ENCODE measurements at regions of chr3 and their contacts with region 1.

Region 1: DNA sequence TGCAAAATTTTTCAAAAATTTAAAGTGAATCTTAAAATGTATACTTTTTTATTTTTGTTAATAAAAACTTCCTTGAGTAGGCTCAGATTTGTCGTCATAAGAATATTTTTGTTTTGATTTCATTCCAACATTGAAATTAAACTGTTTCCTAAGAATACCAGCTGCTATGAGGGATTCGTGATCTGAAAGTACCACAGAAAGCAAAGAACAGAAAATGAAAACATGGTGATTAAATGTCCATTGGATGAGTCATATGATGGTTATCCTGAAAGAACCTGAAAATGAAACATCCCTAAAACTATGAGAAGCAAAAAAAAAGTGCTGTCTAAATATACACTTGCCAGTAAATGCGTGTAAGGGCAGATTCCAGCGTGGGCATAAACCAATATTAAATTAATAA is 143.8 kb downstream of the GMNC start:
- DNase-seq: peak; percentile 48
- H3K4me3 Mint-ChIP-seq: peak overlapping the region; percentile 65
- H3K27ac Mint-ChIP-seq: peak overlapping the region; percentile 93
- H3K4me1 Mint-ChIP-seq: no peaks in the 10 kb centered on the region
- H3K27me3 Mint-ChIP-seq: no peaks in the 10 kb centered on the region
- CTCF ChIP-seq: no peak

Region 2: DNA sequence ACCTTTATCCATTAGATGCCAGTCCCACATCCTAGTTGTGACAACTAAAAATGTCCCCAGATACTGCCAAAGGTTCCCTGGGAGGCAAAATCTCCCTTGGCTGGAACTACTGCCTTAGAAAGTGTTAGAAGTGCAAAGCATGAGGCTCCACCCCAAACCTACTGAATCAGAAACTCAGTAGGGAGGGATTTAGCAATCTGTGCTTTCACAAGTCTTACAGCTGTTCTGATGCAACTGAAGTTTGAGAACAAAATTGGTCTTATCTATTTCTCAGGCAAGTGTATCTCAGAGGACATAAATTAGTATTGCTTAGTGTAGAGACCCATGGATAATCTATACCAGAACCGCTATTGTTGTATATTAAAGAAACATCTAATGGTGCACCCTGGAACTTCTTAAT is 466.6 kb before region 1 on chr3:
- CTCF ChIA-PET with region 1: no interaction called
- POLR2A ChIA-PET with region 1: no interaction called
- intact Hi-C with region 1: no loop called
- DNase-seq: peak; percentile 81
- H3K4me3 Mint-ChIP-seq: no peak overlapping the region
- H3K27ac Mint-ChIP-seq: no peak overlapping the region
- H3K4me1 Mint-ChIP-seq: peaks cover 9% of the 10 kb centered on the region
- H3K27me3 Mint-ChIP-seq: no peaks in the 10 kb centered on the region
- CTCF ChIP-seq: no peak

Region 3: DNA sequence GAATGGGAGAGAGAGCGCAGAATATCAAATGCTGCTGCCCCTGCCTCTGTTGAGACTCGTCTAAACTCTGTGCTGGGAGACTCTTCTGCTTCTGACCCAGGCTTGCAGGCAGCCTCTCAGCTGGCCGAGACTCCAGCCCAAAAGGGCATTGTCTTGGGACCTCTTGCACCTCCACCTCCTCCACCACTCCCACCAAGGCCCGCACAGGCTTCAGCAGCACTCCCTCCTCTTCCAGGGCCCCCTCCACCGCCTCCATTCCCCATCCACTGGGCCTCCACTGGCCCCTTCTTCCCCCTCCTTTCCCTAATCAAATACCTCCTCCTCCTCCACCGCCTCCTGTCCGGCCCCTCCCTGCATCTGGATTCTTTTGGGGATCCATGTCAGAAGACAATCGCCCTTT is 112.6 kb after region 1 on chr3:
- CTCF ChIA-PET with region 1: no interaction called
- POLR2A ChIA-PET with region 1: no interaction called
- intact Hi-C with region 1: no loop called
- DNase-seq: no peak
- H3K4me3 Mint-ChIP-seq: no peak overlapping the region
- H3K27ac Mint-ChIP-seq: no peak overlapping the region
- H3K4me1 Mint-ChIP-seq: peaks cover 8% of the 10 kb centered on the region
- H3K27me3 Mint-ChIP-seq: no peaks in the 10 kb centered on the region
- CTCF ChIP-seq: no peak

Region 4: GRCh38 chr3:190862209-190863118 is 143.8 kb after region 1 on chr3 and contains the start of gene GMNC:
- CTCF ChIA-PET with region 1: interaction called, 3 read pairs
- POLR2A ChIA-PET with region 1: no interaction called
- intact Hi-C with region 1: loop called (anchors 5 kb)
- DNase-seq: peak; percentile 82
- H3K4me3 Mint-ChIP-seq: peak within 1 kb of the TSS; percentile 71
- H3K27ac Mint-ChIP-seq: peak within 1 kb of the TSS; percentile 43
- H3K4me1 Mint-ChIP-seq: peaks cover 12% of the 10 kb centered on the region
- H3K27me3 Mint-ChIP-seq: no peaks in the 10 kb centered on the region
- CTCF ChIP-seq: no peak
- total RNA-seq, gene GMNC: not detected in 2 replicates

Region 5: GRCh38 chr3:191051037-191051436 is 332.4 kb after region 1 on chr3:
- CTCF ChIA-PET with region 1: interaction called, 21 read pairs
- POLR2A ChIA-PET with region 1: no interaction called
- intact Hi-C with region 1: loop called (anchors 1 kb)
- DNase-seq: peak; percentile 41
- H3K4me3 Mint-ChIP-seq: no peak overlapping the region
- H3K27ac Mint-ChIP-seq: no peak overlapping the region
- H3K4me1 Mint-ChIP-seq: no peaks in the 10 kb centered on the region
- H3K27me3 Mint-ChIP-seq: no peaks in the 10 kb centered on the region
- CTCF ChIP-seq: peak; percentile 38

Region 6: GRCh38 chr3:191328962-191329653 is 610.4 kb after region 1 on chr3 and contains the start of gene CCDC50:
- CTCF ChIA-PET with region 1: no interaction called
- POLR2A ChIA-PET with region 1: no interaction called
- intact Hi-C with region 1: loop called (anchors 5 kb)
- DNase-seq: peak; percentile 80
- H3K4me3 Mint-ChIP-seq: peak within 1 kb of the TSS; percentile 76
- H3K27ac Mint-ChIP-seq: peak within 1 kb of the TSS; percentile 91
- H3K4me1 Mint-ChIP-seq: peaks cover 38% of the 10 kb centered on the region
- H3K27me3 Mint-ChIP-seq: no peaks in the 10 kb centered on the region
- CTCF ChIP-seq: no peak
- total RNA-seq, gene CCDC50: 100 and 115 TPM in 2 replicates

Measured in MCF 10A (cell line).